ENCODE measurements at regions of chr14 and their contacts with region 1.

Region 1: GRCh38 chr14:103333754-103334643 is at the start of gene EIF5:
- DNase-seq: peak; percentile 97
- H3K4me3 ChIP-seq: peak within 1 kb of the TSS; percentile 90
- H3K27ac ChIP-seq: peak within 1 kb of the TSS; percentile 97
- H3K27me3 ChIP-seq: no peaks in the 10 kb centered on the region
- CTCF ChIP-seq: peak; percentile 23; the same call in 1 of the 2 replicates
- polyA plus RNA-seq, gene EIF5: 365 and 477 TPM in 2 replicates

Region 2: GRCh38 chr14:103385152-103385993 is 51.4 kb after region 1 on chr14 and contains the start of gene MARK3:
- CTCF ChIA-PET with region 1: interaction called, 6 read pairs
- POLR2A ChIA-PET with region 1: interaction called, 10 read pairs
- DNase-seq: peak; percentile 90
- H3K4me3 ChIP-seq: peak within 1 kb of the TSS; percentile 75
- H3K27ac ChIP-seq: peak within 1 kb of the TSS; percentile 81
- H3K27me3 ChIP-seq: no peaks in the 10 kb centered on the region
- CTCF ChIP-seq: peak; percentile 16; the same call in 1 of the 2 replicates
- polyA plus RNA-seq, gene MARK3: 81.3 and 109 TPM in 2 replicates